ENCODE measurements at regions of chr19 and their contacts with region 1.

Region 1: GRCh38 chr19:33332248-33332647 is 29.9 kb upstream of the CEBPA start:
- DNase-seq: no peak
- H3K4me3 ChIP-seq: no peak overlapping the region
- H3K4me3 Mint-ChIP-seq: no peak overlapping the region
- H3K27ac Mint-ChIP-seq: no peak overlapping the region
- H3K4me1 ChIP-seq: peaks cover 8% of the 10 kb centered on the region; the same call in 1 of the 2 replicates
- H3K4me1 Mint-ChIP-seq: peaks cover 16% of the 10 kb centered on the region
- H3K27me3 ChIP-seq: no peaks in the 10 kb centered on the region
- H3K27me3 Mint-ChIP-seq: no peaks in the 10 kb centered on the region
- CTCF ChIP-seq: no peak

Region 2: DNA sequence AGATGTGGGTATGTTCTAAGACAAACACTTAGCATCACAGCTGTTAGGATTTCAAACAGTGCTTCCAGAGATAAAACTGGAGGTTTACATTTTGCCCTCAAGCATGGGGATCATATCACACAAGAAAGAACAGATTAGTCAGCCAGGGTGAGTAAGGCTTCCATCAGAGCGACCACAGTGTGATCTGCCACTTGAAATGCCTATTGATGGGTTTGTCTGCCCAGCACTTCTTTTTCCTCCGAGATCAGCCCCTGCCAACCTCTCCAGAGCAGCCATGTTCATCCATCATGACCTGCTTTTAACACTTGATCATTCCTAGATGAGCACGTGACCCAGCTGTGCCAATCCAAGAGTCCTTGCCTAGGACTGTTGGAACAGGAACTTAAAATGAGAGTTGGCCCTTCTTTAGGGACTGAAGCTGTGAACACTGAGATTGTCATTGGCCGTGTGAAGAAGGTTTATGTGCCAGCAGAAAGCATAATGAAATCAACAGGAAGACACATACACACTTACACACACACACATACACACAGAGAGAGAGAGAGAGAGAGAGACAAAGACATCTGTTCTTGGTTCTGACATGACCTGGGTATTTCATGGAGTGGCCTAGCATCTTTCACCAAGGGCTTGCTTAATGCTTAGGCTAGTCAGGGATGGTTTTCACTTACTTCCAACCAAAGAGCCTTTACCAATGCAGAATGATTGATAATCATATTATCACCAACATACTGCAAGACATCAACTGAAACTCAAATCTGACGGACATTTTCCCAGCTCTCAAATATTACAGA is 36.0 kb after region 1 on chr19:
- CTCF ChIA-PET with region 1: interaction called, 4 read pairs
- POLR2A ChIA-PET with region 1: interaction called, 3 read pairs
- intact Hi-C with region 1: loop called (anchors 5 kb)
- DNase-seq: no peak
- H3K4me3 ChIP-seq: no peak overlapping the region
- H3K4me3 Mint-ChIP-seq: no peak overlapping the region
- H3K27ac Mint-ChIP-seq: peak overlapping the region; percentile 73
- H3K4me1 ChIP-seq: peaks cover 48% of the 10 kb centered on the region
- H3K4me1 Mint-ChIP-seq: peaks cover 49% of the 10 kb centered on the region
- H3K27me3 ChIP-seq: no peaks in the 10 kb centered on the region
- H3K27me3 Mint-ChIP-seq: no peaks in the 10 kb centered on the region
- CTCF ChIP-seq: no peak

Region 3: DNA sequence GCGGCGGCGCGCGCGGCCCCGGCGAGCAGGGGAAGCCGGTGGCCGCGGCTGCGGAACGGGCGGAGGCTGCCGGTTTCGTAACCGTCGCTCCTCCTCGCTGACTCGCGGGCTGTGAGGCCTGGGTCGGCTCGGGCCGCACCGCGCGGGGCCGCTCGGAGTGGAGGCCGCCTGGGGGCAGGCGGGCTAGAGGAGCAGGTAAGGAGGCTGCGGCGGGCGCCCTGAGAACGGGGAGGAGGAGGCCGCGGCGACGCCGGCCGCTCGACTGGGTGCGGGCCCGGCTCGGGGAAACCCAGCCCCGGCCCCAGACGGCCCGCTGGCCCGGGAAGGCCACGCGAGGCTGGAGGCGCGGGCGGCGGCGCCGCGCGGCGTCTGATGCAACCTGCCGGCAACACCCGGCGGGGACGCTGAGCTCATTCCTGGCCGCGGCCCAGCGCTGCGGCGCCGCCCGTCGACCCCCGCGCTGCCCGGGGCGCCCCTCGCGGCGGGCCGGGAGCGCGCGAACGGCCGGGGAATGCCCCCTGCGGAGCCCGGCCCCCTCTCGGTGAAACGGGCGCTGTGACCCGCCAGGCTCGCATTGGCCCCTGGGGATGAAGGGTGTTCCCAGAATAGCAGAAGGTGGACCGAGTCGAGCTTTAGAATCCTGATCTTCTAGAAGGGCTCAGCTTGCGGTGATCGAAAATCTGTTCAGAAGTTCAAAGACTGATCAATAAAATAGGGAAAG is 41.6 kb after region 1 on chr19 and contains the start of gene CEBPG:
- CTCF ChIA-PET with region 1: interaction called, 4 read pairs
- POLR2A ChIA-PET with region 1: interaction called, 3 read pairs
- intact Hi-C with region 1: loop called (anchors 2 kb)
- DNase-seq: peak; percentile 66 to 90
- H3K4me3 ChIP-seq: peak within 1 kb of the TSS; percentile 65
- H3K4me3 Mint-ChIP-seq: peak within 1 kb of the TSS; percentile 93
- H3K27ac Mint-ChIP-seq: peak within 1 kb of the TSS; percentile 95
- H3K4me1 ChIP-seq: peaks cover 28% of the 10 kb centered on the region
- H3K4me1 Mint-ChIP-seq: peaks cover 26% of the 10 kb centered on the region
- H3K27me3 ChIP-seq: no peaks in the 10 kb centered on the region
- H3K27me3 Mint-ChIP-seq: no peaks in the 10 kb centered on the region
- CTCF ChIP-seq: peak; percentile 22 to 62
- total RNA-seq, gene CEBPG: 74.9 and 79.4 TPM in 2 replicates